Head of caudate nucleus (tissue), 42 donors: ENCODE measurements at regions of chr5 and their contacts with region 1.

Region 1: DNA sequence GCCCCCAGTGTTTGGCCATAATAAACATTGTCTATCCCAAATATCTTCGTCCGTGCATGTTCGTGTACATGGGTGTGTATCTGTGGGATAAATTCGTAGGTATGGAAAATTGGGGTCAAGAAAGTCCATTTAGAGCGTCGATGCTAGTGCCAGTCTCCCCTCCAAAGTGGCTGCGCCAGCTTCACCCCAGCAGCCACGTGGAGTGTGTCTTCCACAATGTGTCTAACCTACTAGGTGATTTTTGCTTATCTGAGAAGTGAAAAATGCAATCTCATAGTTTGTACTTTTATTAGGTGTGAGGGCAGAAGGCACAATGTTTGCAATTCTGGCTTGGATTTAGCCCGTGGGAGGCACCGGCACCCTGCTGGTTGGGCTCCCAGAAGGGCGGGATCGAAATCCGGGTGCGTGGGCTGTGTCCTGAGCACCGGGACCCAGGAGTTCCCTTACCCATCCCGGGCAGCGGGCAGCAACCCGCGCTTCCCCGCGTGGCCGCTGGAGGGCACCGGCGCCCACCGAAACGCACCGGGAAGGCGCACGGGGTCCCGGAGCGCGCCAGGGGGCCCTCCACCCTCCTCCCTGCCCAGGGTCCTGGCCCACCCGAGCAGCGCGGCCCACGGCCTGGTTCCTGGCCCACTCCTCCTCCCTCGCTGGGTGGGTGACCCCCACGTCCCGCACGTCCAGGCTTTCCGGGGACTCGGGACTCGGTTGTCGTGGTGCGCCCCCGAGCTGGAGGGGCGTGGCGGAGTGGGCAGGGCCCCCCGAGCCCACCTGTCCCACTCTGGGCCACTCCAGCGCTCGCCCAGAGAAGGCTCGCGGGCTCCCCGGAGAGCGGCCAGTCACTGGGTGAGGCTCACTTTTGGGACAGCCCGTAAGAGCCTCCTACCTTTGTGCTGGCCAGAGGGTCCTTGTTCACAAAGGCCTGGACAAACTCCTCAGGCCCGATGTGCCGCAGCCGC is 55.4 kb upstream of the RNF130 start:
- DNase-seq: peak in 35 of 42 donors; percentile 28 to 82 (median 60)

Region 2: GRCh38 chr5:180172450-180173197 is 45.6 kb after region 1 on chr5:
- intact Hi-C with region 1: loop called (anchors 10 kb)
- DNase-seq: peak in 37 of 42 donors; percentile 48 to 88 (median 74)

Region 3: DNA sequence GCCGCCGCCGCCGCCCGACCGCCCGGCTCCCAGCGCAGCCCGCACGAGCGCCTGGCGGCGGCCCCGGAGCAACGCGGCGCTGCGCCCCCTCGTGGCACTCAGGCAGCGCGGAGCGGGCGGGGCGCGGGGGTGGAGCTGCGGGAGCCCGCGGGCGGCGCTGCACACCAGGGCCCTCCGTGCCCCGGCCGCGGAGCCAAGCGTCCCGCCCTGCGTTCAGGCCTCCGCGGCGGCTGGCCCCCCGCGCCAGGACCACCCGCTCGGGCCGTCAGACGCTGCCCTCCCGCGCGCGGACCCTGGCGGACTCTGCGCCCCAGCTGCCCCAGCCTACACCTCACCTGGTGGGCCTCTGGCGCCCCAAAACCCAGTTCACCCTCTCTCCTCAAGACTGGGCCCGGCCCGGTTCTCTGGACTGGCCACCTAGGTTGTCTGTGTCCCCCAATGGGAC is 82.2 kb after region 1 on chr5 and contains the start of gene RASGEF1C:
- intact Hi-C with region 1: loop called (anchors 10 kb)
- DNase-seq: peak in 39 of 42 donors; percentile 44 to 88 (median 75)

Region 4: GRCh38 chr5:180291943-180292831 is 165.2 kb after region 1 on chr5 and contains the start of gene MAPK9:
- intact Hi-C with region 1: loop called (anchors 10 kb)
- DNase-seq: peak; percentile 42 to 94 (median 88)